Panc1 (cell line): ENCODE measurements at regions of chr16 and their contacts with region 1.

Region 1: DNA sequence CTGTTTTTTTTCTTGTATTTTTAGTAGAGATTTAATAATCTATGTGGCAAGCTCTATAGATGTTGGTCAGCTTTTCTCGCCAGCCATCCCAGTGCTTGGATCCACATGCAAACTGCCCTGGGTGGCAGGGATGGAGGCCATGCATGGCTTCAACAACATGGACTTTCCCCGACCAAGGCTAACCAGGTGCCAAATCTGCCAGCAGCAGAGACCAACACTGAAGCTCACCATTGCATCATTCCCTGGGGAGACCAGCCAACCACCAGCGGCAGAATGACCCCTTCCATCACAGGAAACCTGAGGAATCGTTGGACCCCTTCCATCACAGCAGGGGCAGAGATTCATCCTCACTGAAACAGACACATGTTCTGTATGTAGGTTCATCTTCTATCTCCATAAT is 27.7 kb upstream of the ERCC4 start:
- DNase-seq: no peak
- ATAC-seq: no peak
- H3K4me3 ChIP-seq: no peak overlapping the region
- H3K27ac ChIP-seq: no peak overlapping the region
- H3K4me1 ChIP-seq: no peaks in the 10 kb centered on the region
- H3K27me3 ChIP-seq: peaks cover 28% of the 10 kb centered on the region
- CTCF ChIP-seq: no peak

Region 2: GRCh38 chr16:14202697-14203096 is 310.4 kb after region 1 on chr16:
- CTCF ChIA-PET with region 1: interaction called, 13 read pairs
- POLR2A ChIA-PET with region 1: no interaction called
- in situ Hi-C with region 1: no loop called
- intact Hi-C with region 1: no loop called
- DNase-seq: no peak
- ATAC-seq: no peak
- H3K4me3 ChIP-seq: no peak overlapping the region
- H3K27ac ChIP-seq: no peak overlapping the region
- H3K4me1 ChIP-seq: peaks cover 2% of the 10 kb centered on the region; the same call in 1 of the 2 replicates
- H3K27me3 ChIP-seq: no peaks in the 10 kb centered on the region
- CTCF ChIP-seq: peak; percentile 30; the same call in 1 of the 2 replicates